ENCODE measurements at regions of chr17 and their contacts with region 1.

Region 1: GRCh38 chr17:51166197-51166986 is at the start of gene NME2:
- DNase-seq: peak; percentile 95 to 96 (median 96)
- ATAC-seq: peak; percentile 96
- H3K4me3 ChIP-seq: peak within 1 kb of the TSS; percentile 94
- H3K27ac ChIP-seq: peak within 1 kb of the TSS; percentile 92
- H3K4me1 ChIP-seq: peaks cover 6 to 33% of the 10 kb centered on the region in 2 experiments; a peak in 4 of 5 replicates
- H3K27me3 ChIP-seq: no peaks in the 10 kb centered on the region
- CTCF ChIP-seq: 0 out of 6 replicates have a peak, but pooled peaks of 1 of the 3 experiments have one; percentile 17
- EP300 ChIP-seq: no peak
- POLR2A ChIP-seq: peak; percentile 85
- RAD21 ChIP-seq: no peak; a peak in 1 of 4 replicates
- polyA plus RNA-seq, gene NME2: 684 to 924 TPM

Region 2: GRCh38 chr17:51260125-51260880 is 93.9 kb after region 1 on chr17 and contains the start of gene UTP18:
- CTCF ChIA-PET with region 1: no interaction called
- POLR2A ChIA-PET with region 1: interaction called, 3 read pairs
- in situ Hi-C with region 1: no loop called
- intact Hi-C with region 1: loop called (anchors 5 kb)
- DNase-seq: peak; percentile 95 to 97 (median 96)
- ATAC-seq: peak; percentile 84
- H3K4me3 ChIP-seq: peak within 1 kb of the TSS; percentile 86
- H3K27ac ChIP-seq: peak within 1 kb of the TSS; percentile 98
- H3K4me1 ChIP-seq: peaks cover 16 to 26% of the 10 kb centered on the region in 2 experiments; a peak in 4 of 5 replicates
- H3K27me3 ChIP-seq: no peaks in the 10 kb centered on the region
- CTCF ChIP-seq: no peak
- EP300 ChIP-seq: peak; percentile 5; the same call in 1 of the 2 replicates
- POLR2A ChIP-seq: peak; percentile 82
- RAD21 ChIP-seq: no peak
- polyA plus RNA-seq, gene UTP18: 31.1 to 31.4 TPM

Measured in K562 (cell line).